Left ventricle myocardium superior (tissue), 1 donor: ENCODE measurements at regions of chr1 and their contacts with region 1.

Region 1: GRCh38 chr1:16078925-16079656 is 5.6 kb upstream of the FAM131C start:
- DNase-seq: peak; percentile 86
- ATAC-seq: peak; percentile 68

Region 2: GRCh38 chr1:16155532-16156410 is 76.7 kb after region 1 on chr1 and contains the start of gene EPHA2:
- intact Hi-C with region 1: loop called (anchors 2 kb)
- DNase-seq: peak; percentile 95
- ATAC-seq: peak; percentile 79
- total RNA-seq, gene EPHA2: 7.6 TPM

Region 3: DNA sequence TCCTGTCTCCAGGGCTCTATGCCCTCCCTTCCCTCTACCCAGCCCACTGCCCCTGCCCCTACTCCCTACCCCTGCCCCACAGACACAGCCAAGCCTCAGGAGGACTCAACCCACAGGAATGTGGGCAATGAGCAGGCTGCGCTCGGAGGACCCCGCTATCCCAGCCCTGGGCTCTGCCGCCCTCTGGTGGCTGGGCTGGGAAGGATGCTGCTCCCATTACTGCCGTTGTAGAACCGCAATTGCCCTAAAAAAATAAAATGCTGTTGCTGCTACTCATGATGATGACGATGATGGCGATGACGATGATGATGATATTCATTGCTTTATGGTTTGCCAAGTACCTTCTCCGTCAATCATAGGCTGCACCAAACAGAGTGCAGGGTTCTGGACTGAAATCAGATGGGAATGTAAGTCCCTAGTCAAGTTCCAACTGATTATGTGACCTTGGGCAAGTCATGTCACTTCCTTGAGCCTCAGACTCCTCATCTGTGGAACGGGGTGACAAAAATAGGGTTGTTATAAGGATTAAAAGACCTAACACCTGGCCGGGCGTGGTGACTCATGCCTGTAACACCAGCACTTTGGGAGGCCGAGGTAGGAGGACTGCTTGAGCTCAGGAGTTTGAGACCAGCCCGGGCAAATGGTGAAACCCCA is 108.8 kb after region 1 on chr1:
- intact Hi-C with region 1: loop called (anchors 2 kb)
- DNase-seq: peak; percentile 89
- ATAC-seq: peak; percentile 82

Region 4: GRCh38 chr1:16249596-16250241 is 170.6 kb after region 1 on chr1:
- intact Hi-C with region 1: no loop called
- DNase-seq: peak; percentile 52
- ATAC-seq: peak; percentile 19

Region 5: DNA sequence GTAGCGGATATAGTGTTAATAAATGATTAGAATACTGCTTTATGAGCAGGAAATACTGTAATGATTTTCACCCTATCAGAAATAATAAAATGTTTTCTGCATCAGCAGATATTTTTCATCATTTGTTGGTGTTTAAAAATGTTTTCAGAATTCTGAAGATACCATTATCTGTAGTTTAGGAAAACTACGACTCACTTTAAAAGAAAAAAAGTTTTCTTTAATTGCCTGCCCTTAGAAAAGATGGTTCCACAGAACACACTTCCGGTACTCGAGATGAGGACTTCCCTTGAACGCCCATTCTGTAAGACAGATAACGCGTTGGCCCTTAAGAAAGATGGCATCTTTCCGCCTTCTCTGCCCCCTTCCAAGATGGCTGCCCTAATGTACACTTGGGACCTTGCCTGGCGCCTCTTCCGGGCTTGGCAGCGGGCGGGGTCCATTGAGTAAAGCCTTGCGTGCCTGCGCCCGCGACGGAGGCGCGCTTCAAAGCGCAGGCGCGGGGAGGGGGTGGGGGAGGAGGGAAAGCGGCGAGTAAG is 287.7 kb after region 1 on chr1 and contains the start of gene SZRD1:
- intact Hi-C with region 1: loop called (anchors 10 kb)
- DNase-seq: peak; percentile 98
- ATAC-seq: peak; percentile 89
- total RNA-seq, gene SZRD1: 109 TPM

Region 6: DNA sequence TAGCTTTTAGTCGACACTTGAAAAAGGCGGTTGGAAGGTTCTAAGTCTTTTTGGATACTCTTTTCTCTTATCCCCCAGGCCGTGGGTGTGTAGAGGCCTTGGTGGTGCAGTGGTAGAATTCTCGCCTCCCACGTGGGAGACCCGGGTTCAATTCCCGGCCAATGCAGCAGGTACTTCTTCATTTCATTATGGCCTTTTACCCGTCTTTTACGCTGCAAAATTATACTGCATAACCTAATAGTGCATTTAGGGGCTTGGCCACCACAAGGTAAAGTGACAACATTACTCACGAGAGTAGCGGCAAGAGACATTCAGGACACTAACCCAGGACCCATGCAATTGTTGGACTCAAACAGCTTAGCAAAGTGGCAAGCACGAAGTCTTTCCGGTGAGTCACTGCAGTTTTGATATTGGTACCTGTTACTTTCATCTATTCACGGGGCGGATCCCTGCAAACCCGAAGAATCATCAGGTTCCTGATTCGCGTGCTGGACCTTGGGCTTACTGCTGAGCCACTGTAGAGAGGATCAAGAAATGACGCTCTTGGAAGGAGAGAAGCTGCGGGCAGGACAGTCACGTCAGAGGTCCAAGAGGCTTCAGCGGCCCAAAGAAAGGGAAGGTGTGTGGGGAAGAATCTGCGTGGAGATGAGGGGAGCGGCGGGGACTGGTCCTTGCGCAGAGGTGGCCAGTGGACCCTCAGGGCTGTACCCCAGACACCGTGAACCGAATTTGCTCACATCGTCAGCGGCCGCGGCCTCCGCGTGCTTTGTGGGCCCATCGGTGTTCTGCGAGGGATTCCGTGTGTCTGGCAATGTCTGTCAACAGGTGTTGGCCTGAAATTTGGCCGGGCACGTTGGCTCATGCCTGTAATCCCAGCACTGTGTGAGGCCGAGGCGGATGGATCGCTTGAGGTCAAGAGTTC is 648.4 kb after region 1 on chr1:
- intact Hi-C with region 1: no loop called
- DNase-seq: no peak
- ATAC-seq: no peak